Prostate gland (tissue), 2 donors: ENCODE measurements at regions of chr12 and their contacts with region 1.

Region 1: GRCh38 chr12:4276524-4277204 is 3.1 kb downstream of the CCND2 start:
- DNase-seq: peak; percentile 80
- H3K4me3 ChIP-seq: peak overlapping the region in 1 of 2 donors; percentile 45
- H3K27ac ChIP-seq: peak overlapping the region in 1 of 2 donors; percentile 82
- H3K4me1 ChIP-seq: no peaks in the 10 kb centered on the region
- H3K27me3 ChIP-seq: peaks cover 2% of the 10 kb centered on the region
- CTCF ChIP-seq: peak; percentile 87 to 95 (median 90)
- POLR2A ChIP-seq: no peak

Region 2: DNA sequence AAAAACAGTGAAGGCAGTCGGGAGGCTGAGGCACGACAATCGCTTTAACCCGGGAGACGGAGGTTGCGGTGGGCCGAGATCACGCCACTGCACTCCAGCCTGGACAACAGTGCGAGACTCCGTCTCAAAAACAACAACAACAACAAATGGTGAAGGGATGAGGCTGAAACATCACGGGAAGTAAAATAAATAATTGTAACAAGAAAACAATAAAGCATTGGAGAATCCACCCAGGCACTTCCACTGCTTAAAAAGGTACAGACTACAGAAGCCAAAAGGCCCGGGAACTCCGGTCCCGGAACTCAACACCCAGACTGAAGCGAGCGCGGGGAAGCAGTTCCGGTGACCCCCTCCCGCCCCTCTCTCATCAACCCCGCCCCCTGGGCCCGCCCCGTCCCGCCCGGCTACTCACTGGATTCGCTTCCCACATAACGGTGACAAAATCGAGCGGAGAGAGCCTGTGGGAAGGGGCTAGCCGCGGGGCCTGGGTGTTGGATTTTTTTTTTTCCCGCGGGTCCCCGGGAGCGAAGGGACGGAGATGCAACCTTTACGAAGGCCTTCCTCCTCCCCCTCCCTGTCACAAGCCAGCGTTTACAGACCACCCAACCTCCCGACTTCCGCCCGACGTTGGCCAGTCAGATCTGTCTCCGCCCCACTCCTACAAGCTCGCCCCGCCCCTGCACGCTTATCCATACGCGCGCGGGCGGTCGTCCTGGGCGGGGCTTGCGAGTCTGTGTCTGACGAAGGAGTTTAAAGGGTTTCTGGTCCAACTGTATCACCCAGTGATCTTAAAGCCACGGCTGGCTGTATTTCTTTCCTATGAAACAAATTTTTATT is 403.6 kb before region 1 on chr12 and contains the start of gene PARP11:
- intact Hi-C with region 1: loop called (anchors 5 kb)
- DNase-seq: peak; percentile 96
- H3K4me3 ChIP-seq: peak within 1 kb of the TSS; percentile 44 to 69
- H3K27ac ChIP-seq: peak within 1 kb of the TSS; percentile 91 to 93
- H3K4me1 ChIP-seq: peaks cover 3% of the 10 kb centered on the region
- H3K27me3 ChIP-seq: no peaks in the 10 kb centered on the region
- CTCF ChIP-seq: no peak
- POLR2A ChIP-seq: peak; percentile 36
- total RNA-seq, gene PARP11: 19.6 to 26.8 TPM

Region 3: DNA sequence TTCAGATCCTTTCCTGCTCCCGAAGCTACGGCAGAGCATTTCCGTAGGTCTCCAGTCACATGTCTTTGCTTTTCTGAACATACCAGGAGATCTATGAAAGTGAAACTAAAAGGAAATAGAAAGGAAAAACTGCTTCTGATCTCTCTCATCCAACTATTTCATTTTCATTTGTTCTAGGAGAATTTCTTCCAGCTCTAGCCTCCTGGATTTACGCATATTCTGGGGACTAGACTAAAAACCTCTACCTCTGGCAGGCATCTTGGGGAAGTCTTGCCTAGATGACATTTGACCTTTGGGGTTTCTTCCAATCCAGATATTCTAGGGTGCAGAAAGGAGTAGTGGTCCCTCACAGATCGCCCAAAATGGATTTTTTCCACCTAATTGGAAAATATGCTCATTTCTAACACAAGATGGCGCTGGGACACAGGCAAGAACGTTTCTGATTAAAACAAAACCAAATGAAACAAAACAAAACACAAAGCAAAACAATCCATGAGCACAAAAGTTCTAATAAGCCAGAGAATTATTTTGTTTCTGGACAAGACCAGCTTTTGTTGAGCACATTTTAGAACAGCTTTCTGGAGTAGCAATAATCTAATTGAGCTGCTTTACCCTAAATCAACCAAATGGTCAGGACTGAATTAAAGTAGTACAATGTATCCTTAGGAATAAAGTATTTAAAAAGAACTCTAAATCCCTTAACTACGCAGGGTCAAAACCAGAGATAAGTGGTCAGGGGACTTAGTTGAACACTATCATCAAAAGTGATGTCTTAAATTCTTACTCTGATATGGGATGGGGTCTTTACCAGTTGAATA is 391.2 kb before region 1 on chr12:
- intact Hi-C with region 1: loop called (anchors 5 kb)
- DNase-seq: peak; percentile 20
- H3K4me3 ChIP-seq: no peak overlapping the region
- H3K27ac ChIP-seq: peak overlapping the region; percentile 28 to 43
- H3K4me1 ChIP-seq: no peaks in the 10 kb centered on the region
- H3K27me3 ChIP-seq: no peaks in the 10 kb centered on the region
- CTCF ChIP-seq: peak; percentile 45 to 91 (median 81)
- POLR2A ChIP-seq: no peak

Region 4: DNA sequence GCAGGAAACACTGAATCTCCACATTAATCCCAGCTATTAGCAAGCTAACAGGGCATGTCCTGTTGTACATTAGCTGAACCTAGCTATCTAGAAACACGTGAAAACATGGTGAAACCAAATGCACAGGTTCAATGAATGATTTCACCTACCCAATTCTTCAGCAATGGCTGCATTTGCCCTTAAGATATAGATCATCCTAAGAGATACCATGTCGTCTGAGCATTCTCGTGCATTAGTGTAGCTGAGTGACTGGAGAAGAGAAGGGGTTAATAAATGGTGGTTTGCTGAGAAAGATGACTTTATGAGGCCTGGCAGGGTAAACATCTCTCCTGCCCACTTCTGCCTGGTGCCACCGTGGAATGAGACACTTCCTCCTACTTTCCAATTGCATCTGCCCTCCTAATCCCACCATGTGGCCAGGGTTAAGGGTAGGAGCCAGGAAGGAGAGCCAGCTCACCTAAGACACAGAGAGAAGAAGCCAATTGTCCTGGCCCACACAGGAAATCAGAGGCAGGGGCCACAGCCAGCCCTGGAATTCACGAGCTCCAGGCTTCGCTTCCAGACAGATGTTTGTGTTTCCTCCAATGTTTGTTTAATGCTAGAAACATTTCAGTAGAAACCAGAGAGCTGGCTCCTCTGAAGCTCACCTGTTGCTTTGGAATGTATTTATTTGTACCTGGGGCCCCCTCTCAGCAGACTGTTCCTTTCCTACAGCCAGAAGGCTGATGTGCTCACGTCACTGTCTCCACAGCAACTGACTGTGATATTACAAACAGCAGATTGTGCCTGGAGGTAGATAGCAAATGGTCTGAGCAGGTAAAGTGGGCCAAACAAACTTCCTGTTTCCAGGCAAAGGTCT is 277.5 kb before region 1 on chr12:
- intact Hi-C with region 1: loop called (anchors 5 kb)
- DNase-seq: peak; percentile 78
- H3K4me3 ChIP-seq: no peak overlapping the region
- H3K27ac ChIP-seq: no peak overlapping the region
- H3K4me1 ChIP-seq: no peaks in the 10 kb centered on the region
- H3K27me3 ChIP-seq: no peaks in the 10 kb centered on the region
- CTCF ChIP-seq: no peak
- POLR2A ChIP-seq: no peak

Region 5: DNA sequence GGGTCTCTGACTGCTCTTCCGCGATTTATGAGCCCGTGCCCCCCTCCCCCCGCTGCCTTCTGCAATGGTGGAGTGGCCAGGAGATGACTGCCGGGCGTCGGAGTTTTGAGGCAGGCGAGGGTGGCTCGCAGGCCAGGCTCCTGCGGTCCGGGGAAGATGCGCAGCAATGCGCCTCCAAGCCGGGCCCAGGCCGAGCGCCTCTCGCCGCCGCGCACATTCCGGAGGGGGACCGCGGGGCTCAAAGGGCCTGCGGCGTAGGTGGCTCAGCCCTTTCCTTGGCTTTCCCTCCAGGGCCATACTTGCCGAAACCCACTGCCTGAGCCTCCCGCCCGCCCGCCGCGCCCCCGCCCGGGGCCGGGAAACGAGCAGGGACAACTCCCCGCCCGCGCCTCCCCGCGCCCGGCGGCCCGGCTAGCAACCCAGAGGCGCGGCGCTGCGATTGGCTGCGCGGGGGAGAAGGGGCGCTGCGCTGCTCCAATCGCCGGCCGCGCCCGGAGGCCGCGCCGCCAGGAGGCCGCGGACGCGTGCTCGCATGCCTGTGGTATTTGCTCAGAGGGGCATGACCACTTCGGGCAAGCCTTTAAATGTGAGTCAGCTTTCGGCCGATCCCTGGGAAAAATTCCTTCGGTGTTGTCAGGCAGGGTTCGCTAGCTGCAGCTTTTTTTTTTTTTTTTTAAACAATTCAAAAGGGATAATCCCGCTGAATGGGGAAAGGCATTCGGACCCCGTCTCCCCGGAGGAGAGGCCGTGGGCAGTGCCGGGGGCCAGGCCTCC is 245.5 kb before region 1 on chr12:
- intact Hi-C with region 1: loop called (anchors 5 kb)
- DNase-seq: peak; percentile 90
- H3K4me3 ChIP-seq: peak overlapping the region; percentile 34 to 41
- H3K27ac ChIP-seq: peak overlapping the region; percentile 74 to 81
- H3K4me1 ChIP-seq: no peaks in the 10 kb centered on the region
- H3K27me3 ChIP-seq: no peaks in the 10 kb centered on the region
- CTCF ChIP-seq: peak in 2 of 4 experiments; percentile 9 to 42
- POLR2A ChIP-seq: peak; percentile 54

Region 6: DNA sequence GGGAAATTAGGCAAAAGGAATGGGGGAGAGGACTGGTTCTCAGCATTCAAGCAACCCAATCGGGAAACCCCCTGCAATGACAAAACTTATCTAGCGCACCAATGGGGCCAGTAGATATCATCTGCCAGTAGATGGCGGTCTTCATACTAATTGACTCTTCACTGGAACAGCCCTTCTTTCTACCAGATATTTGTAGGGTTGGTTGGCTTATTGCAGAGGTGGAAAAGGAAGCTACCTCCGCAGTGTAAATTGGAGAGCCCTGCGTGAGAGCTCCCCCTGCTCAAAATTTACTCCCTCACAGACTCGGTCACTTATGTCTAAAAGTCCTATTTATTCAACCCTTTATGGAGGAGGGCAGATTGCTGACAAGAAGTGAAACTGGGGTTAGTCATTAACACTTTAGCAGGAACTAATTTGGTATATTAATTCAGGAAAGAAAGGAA is 169.2 kb before region 1 on chr12:
- intact Hi-C with region 1: loop called (anchors 5 kb)
- DNase-seq: peak; percentile 29
- H3K4me3 ChIP-seq: no peak overlapping the region
- H3K27ac ChIP-seq: no peak overlapping the region
- H3K4me1 ChIP-seq: no peaks in the 10 kb centered on the region
- H3K27me3 ChIP-seq: no peaks in the 10 kb centered on the region
- CTCF ChIP-seq: peak in 3 of 4 experiments; percentile 32 to 41 (median 33)
- POLR2A ChIP-seq: no peak

Region 7: DNA sequence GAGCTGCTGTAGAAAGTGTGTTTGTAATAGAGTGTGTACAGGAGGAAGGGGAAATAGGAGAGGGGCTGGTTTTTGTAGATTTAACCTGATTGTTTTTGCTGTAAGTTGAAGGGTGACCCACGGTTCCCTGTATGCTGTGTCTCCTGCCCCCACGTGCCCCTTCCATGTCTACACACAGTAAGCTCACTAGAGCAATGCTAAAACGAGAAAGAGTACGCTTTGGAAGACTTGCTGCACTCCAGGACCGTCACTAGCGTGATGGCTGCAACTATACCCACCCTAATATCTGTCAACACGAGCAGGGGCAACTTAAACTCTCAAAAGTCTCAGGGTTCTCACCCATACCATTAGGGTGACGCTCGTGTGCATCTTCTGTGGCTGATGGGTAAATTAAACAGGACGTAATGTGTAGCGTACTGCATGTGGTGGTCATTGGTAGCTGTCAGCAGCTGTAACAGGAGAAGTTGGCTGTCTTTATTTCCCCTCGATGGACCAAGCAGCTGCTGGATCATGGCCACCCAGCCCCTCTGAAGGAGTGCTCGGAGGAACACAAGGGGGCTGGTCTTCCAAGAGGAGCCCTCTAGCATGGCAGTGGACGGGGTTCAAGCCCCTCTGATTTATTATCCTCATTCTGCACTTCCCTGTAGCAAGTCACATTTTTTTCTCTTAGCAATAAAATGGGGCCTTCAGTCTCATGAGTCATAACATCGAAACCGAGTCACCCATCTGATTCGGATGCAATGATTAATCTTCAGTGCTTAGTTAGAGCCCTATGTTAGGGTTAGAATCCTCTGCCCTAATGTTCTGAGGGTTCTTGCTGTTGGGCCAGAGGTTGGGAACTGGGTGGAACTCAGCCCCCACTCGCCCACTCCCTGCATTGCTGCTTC is 10.9 kb after region 1 on chr12:
- intact Hi-C with region 1: no loop called
- DNase-seq: no peak
- H3K4me3 ChIP-seq: no peak overlapping the region
- H3K27ac ChIP-seq: peak overlapping the region in 1 of 2 donors; percentile 3
- H3K4me1 ChIP-seq: no peaks in the 10 kb centered on the region
- H3K27me3 ChIP-seq: peaks cover 2% of the 10 kb centered on the region
- CTCF ChIP-seq: no peak
- POLR2A ChIP-seq: no peak

Region 8: DNA sequence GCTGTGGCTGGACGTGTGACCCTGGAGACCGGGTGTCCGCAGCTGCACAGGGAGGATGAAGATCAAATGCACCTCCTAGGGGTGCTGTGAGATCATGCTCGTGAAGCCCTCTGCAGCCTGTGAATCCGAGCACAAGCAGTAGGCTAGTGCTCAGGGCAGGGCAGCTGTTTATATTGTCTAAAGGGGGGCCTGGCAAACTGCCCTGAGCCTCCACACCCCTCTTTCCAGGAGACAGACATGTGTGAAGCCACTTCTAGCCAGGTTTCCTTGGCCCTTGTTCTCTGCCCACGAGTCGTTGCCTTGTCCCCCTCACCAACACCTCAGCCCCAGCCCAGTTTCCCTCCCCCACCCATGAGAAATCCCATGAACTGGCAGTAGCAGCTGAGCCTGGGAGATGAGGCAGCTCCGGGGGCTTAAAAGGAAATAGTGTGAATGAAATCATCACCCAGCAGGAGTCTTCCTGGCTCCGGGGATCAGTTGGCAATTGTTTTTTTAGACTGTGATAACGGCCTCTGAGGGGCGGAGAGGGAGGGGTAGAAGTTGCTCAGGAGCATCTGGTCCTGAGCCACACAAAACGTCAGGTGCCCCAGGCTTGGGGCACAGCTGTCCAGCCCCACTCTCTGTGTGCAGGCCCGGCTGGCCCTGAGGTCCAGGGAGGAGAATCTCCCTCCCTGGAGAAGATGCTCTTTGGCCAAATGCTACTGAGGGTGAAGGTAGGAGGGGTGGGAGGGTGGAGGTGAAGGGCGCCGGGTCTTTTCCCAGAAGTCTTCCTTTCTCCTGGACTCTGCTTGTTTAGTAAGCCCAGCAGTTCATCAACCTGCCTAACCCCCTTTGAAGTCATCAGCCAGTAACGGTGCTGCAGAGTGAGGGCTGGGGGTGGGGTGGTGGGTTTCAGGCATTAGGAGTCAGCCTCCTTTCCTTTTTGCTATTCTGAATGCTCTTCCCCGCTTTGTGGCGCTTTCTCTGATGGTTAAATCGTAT is 165.0 kb after region 1 on chr12:
- intact Hi-C with region 1: no loop called
- DNase-seq: no peak
- H3K4me3 ChIP-seq: no peak overlapping the region
- H3K27ac ChIP-seq: no peak overlapping the region
- H3K4me1 ChIP-seq: no peaks in the 10 kb centered on the region
- H3K27me3 ChIP-seq: peaks cover 3% of the 10 kb centered on the region
- CTCF ChIP-seq: no peak
- POLR2A ChIP-seq: no peak